Colonic mucosa (tissue), 4 donors: ENCODE measurements at regions of chr11 and their contacts with region 1.

Region 1: GRCh38 chr11:101436511-101437142 is 147.2 kb downstream of the TRPC6 start:
- DNase-seq: peak; percentile 41
- H3K4me3 ChIP-seq: no peak overlapping the region
- H3K27ac ChIP-seq: no peak overlapping the region
- H3K4me1 ChIP-seq: no peaks in the 10 kb centered on the region
- H3K27me3 ChIP-seq: no peaks in the 10 kb centered on the region
- CTCF ChIP-seq: peak; percentile 39

Region 2: DNA sequence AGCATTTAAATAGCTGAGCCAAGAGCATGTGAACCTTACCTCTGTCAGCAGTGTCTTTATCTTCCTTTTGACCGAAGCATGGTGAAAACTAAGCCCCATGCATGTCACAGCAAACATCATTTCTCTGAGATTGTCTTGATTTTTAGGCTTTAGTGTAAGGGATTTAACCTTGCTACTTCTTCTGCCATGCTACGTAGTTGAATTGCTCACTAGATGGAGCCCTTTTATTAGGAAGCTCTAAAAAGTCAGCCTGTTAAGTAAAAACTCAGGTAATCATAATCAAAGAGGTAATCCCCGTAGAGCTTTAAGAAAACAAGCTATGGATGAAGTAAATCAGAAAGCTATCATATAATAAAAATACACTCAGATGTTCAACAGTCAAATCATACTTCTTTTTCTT is 456.5 kb before region 1 on chr11:
- intact Hi-C with region 1: loop called (anchors 10 kb)
- DNase-seq: no peak
- H3K4me3 ChIP-seq: no peak overlapping the region
- H3K27ac ChIP-seq: no peak overlapping the region
- H3K4me1 ChIP-seq: no peaks in the 10 kb centered on the region
- H3K27me3 ChIP-seq: no peaks in the 10 kb centered on the region
- CTCF ChIP-seq: no peak

Region 3: GRCh38 chr11:101487775-101488174 is 51.1 kb after region 1 on chr11:
- intact Hi-C with region 1: no loop called
- DNase-seq: no peak
- H3K4me3 ChIP-seq: no peak overlapping the region
- H3K27ac ChIP-seq: no peak overlapping the region
- H3K4me1 ChIP-seq: no peaks in the 10 kb centered on the region
- H3K27me3 ChIP-seq: no peaks in the 10 kb centered on the region
- CTCF ChIP-seq: no peak